Heart left ventricle (tissue), 16 donors: ENCODE measurements at regions of chr17 and their contacts with region 1.

Region 1: DNA sequence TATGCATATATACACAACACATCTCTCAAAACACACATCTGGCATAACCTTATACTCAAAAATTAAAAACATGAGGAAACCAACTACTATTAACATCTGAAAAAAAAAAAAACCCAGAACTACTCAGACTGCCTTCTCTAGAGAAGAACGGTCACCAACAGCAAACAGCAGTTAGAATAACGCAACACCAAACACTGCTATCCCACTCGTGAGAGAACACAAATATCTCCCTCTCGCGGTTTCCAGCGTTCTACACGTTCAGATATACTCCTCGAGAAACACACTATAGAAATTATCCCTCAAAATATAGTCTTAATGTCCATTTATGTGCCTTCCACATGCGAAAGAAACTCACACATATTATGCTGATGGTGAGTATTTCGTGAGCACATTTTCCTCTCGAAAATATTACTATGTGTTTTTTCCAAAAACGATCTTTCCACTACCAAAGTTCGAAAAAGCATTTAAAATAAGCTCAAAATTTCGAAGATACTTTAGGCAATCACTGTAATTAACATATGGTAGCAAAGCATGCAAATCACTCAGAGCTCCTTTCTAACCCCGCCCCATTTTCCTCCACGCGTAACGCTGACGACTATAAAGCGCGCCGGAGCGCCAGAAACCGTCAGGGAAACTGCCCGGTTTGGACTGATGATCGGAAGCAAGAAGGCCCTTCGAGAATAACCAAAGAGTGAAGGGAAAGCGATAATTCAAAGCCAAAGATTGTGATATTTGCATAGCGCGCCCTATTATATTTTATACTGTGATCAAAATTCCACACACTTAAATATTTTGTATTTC is 60.1 kb downstream of the TEX14 start:
- DNase-seq: peak; percentile 94 to 96 (median 95)
- ATAC-seq: peak; percentile 97 to 98 (median 97)
- H3K4me3 ChIP-seq: peak overlapping the region; percentile 2 to 61 (median 48)
- H3K27ac ChIP-seq: peak overlapping the region; percentile 49 to 93 (median 78)
- H3K4me1 ChIP-seq: peaks cover 0 to 24% (median 4%) of the 10 kb centered on the region in 12 donors
- H3K27me3 ChIP-seq: no peaks in the 10 kb centered on the region
- CTCF ChIP-seq: peak in 7 of 12 donors; percentile 6 to 43 (median 22)
- POLR2A ChIP-seq: peak in 1 of 2 donors; percentile 84

Region 2: GRCh38 chr17:58531661-58532554 is 99.8 kb before region 1 on chr17:
- intact Hi-C with region 1: loop called in 3 of 10 experiments (anchors 5 to 10 kb)
- DNase-seq: peak; percentile 68 to 84 (median 76)
- ATAC-seq: peak; percentile 33 to 88 (median 79)
- H3K4me3 ChIP-seq: peak overlapping the region; percentile 40 to 88 (median 64)
- H3K27ac ChIP-seq: peak overlapping the region; percentile 9 to 78 (median 68)
- H3K4me1 ChIP-seq: peaks cover 4 to 86% (median 45%) of the 10 kb centered on the region in 12 donors
- H3K27me3 ChIP-seq: peaks cover 0 to 5% (median 0%) of the 10 kb centered on the region in 9 donors
- CTCF ChIP-seq: no peak
- POLR2A ChIP-seq: peak in 1 of 2 donors; percentile 42

Region 3: DNA sequence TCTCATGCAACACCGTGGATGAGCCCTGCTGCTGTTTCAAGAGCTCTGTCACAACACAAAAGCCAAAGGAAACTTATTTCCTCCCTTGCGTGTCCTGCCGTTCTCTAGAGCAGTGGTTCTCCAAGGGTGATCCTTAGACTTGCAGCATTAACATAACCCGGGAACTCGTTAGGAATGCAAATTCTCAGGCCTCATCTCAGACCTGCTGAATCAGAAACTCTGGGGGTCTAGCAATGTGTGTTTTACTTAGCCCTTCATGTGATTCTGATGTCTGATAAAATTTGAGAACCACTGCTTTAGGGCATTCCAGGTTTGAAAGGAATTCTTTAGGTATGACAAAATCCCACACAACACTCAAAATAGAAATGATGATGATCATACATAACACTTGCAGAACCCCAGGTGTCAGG is 65.9 kb before region 1 on chr17:
- intact Hi-C with region 1: no loop called
- DNase-seq: no peak
- ATAC-seq: no peak
- H3K4me3 ChIP-seq: no peak overlapping the region
- H3K27ac ChIP-seq: no peak overlapping the region
- H3K4me1 ChIP-seq: peaks cover 0 to 26% (median 0%) of the 10 kb centered on the region in 12 donors
- H3K27me3 ChIP-seq: no peaks in the 10 kb centered on the region
- CTCF ChIP-seq: no peak
- POLR2A ChIP-seq: no peak

Region 4: DNA sequence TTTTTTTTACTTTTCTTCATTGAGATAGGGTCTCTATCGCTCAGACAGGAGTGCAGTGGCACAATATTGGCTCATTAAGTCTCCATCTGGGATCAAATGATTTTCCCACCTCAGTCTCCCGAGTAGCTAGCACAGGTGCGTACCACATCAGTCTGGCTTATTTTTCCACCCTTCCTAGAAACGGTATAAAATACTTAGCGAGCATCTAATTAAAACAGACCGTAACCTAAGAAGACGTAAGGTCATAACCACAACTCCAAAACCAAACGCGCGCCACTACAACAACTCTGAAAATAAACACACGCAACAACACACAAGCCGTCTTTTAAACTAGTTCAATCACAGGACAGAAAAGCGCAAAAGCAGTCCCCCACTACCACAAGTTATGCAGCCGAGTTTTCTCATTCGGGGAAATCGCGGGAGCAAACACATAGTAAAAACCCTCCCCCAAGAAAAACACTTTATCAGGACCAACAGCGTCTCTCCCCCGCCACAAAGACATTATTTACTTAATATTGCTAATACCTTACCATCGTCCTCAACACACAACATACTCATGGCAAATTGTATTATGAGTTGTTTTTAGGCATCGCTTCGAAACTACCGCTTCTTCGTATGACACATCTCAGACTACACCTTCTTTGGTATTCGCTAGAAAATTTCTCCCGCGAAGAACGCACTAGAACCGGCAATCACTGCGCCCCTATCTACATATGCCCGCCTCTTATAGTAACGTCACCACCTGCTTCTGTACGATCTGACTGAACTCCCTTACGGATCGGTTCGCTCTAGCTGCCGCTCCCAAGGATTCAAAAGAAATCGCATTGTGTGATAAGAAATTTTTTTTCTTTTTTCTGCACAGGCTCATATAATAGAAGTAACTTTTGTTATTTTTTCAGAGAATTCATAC is 27.3 kb after region 1 on chr17:
- intact Hi-C with region 1: loop called in 4 of 10 experiments (anchors 1 to 2 kb)
- DNase-seq: peak in 4 of 5 donors; percentile 76 to 84 (median 78)
- ATAC-seq: peak; percentile 95 to 98 (median 97)
- H3K4me3 ChIP-seq: peak overlapping the region in 11 of 12 donors; percentile 34 to 74 (median 48)
- H3K27ac ChIP-seq: peak overlapping the region; percentile 58 to 90 (median 80)
- H3K4me1 ChIP-seq: peaks cover 0 to 12% (median 0%) of the 10 kb centered on the region in 12 donors
- H3K27me3 ChIP-seq: no peaks in the 10 kb centered on the region
- CTCF ChIP-seq: peak in 1 of 12 donors; percentile 15
- POLR2A ChIP-seq: peak; percentile 93 to 98

Region 5: GRCh38 chr17:58692239-58693055 is 60.7 kb after region 1 on chr17 and contains the start of gene RAD51C:
- intact Hi-C with region 1: loop called in 1 of 10 experiments (anchors 2 kb)
- DNase-seq: peak; percentile 86 to 93 (median 87)
- ATAC-seq: peak; percentile 89 to 100 (median 100)
- H3K4me3 ChIP-seq: peak within 1 kb of the TSS; percentile 45 to 87 (median 70)
- H3K27ac ChIP-seq: peak within 1 kb of the TSS in 11 of 12 donors; percentile 53 to 91 (median 79)
- H3K4me1 ChIP-seq: peaks cover 0 to 19% (median 11%) of the 10 kb centered on the region in 12 donors
- H3K27me3 ChIP-seq: no peaks in the 10 kb centered on the region
- CTCF ChIP-seq: no peak
- POLR2A ChIP-seq: peak in 1 of 2 donors; percentile 57
- total RNA-seq, gene RAD51C: 17.1 to 48.9 (median 39.6) TPM